ENCODE measurements at regions of chr12 and their contacts with region 1.

Region 1: DNA sequence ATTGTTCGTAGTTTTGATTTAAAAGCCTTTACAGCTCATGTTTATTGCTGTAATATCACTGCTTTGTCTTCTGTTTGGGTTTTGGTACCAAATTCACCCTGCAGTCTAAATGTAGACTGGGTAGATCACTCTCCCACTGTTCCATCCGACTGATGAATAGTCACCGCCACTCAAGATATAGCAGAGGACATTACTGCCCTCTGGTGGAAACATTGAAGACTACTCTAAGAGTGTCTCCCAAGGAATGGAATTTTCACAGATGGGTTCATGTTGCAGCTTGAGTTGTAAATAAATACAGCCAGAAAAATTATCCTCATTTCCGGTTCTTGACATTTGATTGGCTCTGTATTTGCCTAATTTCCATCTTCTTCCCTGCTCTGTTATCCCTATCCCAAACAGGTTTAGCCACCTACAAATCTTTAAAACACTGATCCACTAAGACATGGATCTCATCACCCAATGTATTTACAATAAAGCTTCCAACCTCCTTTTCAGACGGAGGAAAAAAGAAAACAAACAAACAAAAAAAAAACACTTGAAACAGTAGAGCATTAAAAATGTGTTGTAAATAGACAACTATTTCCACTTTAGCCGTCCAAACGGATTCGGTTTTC is 198.3 kb upstream of the CPNE8 start:
- DNase-seq: no peak
- ATAC-seq: peak; percentile 90 to 91

Region 2: DNA sequence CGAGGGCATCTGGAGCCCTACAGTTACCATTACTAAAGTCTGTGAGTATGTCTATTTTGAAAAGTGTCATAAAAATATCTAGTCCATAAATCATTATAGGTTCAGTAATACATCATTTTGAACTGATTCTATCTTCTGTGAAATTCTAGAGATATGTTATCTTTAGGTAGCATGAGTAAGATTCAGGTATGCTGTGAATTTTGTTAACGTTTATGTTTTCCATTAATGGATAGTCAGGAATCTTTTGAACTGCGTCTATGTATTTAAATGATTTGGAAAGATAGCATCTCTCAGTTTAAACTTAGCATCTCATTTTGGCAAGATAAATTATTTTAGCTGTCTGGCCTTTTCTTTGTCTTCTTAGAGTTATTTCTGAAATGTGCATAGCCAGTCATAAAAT is 778.8 kb before region 1 on chr12:
- intact Hi-C with region 1: loop called in 1 of 2 experiments (anchors 5 kb)
- DNase-seq: no peak
- ATAC-seq: no peak

Region 3: GRCh38 chr12:38664661-38665269 is 438.9 kb before region 1 on chr12:
- intact Hi-C with region 1: loop called in 1 of 2 experiments (anchors 10 kb)
- DNase-seq: no peak
- ATAC-seq: no peak

Region 4: DNA sequence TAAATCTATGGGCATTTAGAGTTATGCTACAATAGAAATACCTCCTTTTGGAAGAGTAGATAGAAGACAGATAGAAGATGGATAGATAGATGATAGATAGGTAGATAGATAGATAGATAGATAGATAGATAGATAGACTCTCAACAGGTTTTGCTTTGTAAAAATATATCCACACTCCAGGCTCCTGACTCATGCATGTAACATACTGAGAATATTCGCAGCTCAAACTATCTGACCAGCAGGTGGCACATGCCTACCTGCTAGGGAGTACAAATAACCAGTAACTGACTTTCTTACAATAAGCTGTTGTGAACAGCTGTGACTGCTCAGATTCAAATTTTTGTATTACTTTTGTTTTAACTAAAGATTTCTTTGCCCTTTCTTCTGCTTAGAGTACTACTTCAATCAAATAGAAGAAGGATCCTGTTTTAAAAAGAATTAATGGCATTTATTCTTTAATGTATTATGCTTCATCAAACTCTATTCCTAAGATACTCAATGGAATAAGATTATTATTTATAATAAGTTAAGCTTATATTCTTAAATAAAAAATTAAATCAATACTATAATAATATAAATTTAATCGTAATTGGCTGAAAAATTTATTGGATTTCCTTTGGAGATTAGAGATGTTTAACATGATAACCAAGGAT is 182.5 kb before region 1 on chr12:
- intact Hi-C with region 1: loop called (anchors 1 to 5 kb)
- DNase-seq: peak; percentile 59
- ATAC-seq: peak; percentile 55 to 72

Measured in left cardiac atrium (tissue), 4 donors.